Right lobe of liver (tissue), 6 donors: ENCODE measurements at regions of chr1 and their contacts with region 1.

Region 1: DNA sequence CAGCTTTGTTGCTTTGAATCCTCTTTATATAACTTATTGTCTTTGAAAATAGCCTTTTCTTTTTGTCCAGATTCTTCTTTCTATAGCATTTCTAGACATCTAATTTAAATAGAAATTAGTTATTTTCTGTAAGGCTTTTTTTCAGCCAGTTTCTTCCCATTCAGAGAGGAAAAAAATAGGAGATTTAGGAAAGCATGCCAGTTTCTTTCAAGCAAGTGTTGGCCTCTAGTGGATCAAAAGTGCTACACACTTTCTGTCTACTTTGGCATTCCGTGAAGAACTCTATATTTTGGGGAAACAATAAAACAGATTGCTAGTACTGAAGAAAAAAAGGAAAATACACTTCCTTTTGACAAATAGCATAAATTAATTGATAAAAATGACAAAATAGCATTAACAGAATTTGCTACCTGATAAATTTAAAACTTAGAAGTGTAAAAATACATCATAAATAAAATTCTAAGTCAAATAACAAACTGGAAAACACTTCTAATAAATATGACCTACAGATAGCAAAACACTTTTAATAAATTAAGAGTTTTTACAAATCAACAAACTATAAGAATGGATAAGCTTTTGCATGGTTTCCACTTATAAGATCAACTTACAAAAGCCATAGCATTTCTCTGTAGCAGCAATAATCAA is 13.1 kb upstream of the EXO1 start:
- DNase-seq: no peak
- ATAC-seq: peak; percentile 76 to 95 (median 82)
- H3K4me3 ChIP-seq: no peak overlapping the region
- H3K27ac ChIP-seq: no peak overlapping the region
- H3K4me1 ChIP-seq: no peaks in the 10 kb centered on the region
- H3K27me3 ChIP-seq: no peaks in the 10 kb centered on the region
- CTCF ChIP-seq: peak; percentile 62 to 76 (median 70)
- POLR2A ChIP-seq: no peak

Region 2: GRCh38 chr1:241592273-241592958 is 242.4 kb before region 1 on chr1:
- intact Hi-C with region 1: no loop called
- DNase-seq: no peak
- ATAC-seq: no peak
- H3K4me3 ChIP-seq: no peak overlapping the region
- H3K27ac ChIP-seq: no peak overlapping the region
- H3K4me1 ChIP-seq: no peaks in the 10 kb centered on the region
- H3K27me3 ChIP-seq: no peaks in the 10 kb centered on the region
- CTCF ChIP-seq: no peak
- POLR2A ChIP-seq: no peak

Region 3: GRCh38 chr1:241611063-241611462 is 223.8 kb before region 1 on chr1:
- intact Hi-C with region 1: loop called in 1 of 2 experiments (anchors 10 kb)
- DNase-seq: no peak
- ATAC-seq: peak; percentile 57 to 72 (median 66)
- H3K4me3 ChIP-seq: no peak overlapping the region
- H3K27ac ChIP-seq: peak overlapping the region; percentile 19 to 82 (median 47)
- H3K4me1 ChIP-seq: peaks cover 0 to 46% (median 18%) of the 10 kb centered on the region in 4 donors
- H3K27me3 ChIP-seq: no peaks in the 10 kb centered on the region
- CTCF ChIP-seq: peak; percentile 66 to 92 (median 74)
- POLR2A ChIP-seq: no peak

Region 4: DNA sequence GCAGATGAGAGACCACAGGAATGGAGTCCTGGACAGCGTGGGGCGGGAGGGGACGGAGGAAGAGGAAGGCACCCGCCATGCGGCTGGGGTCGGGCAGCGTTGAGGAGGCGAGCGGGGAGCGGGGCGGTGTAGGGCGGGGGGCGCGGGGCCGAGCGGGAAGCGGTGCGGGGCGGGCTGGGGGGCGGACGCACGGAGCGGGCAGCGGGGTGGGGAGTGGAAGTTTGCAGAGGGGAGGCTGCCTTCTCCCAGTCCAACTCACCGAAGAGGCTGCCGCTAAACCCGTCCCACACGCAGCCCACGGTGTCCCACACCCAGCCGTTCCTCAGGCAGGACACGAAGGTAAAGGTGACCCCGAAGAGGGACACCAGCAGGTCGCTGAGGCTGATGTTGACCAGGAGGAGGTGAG is 195.2 kb before region 1 on chr1:
- intact Hi-C with region 1: loop called in 1 of 2 experiments (anchors 10 kb)
- DNase-seq: peak; percentile 49 to 69 (median 60)
- ATAC-seq: peak; percentile 9 to 28 (median 18)
- H3K4me3 ChIP-seq: peak overlapping the region; percentile 75 to 85 (median 80)
- H3K27ac ChIP-seq: peak overlapping the region; percentile 69 to 91 (median 88)
- H3K4me1 ChIP-seq: peaks cover 0 to 26% (median 4%) of the 10 kb centered on the region in 4 donors
- H3K27me3 ChIP-seq: no peaks in the 10 kb centered on the region
- CTCF ChIP-seq: no peak
- POLR2A ChIP-seq: no peak

Region 5: DNA sequence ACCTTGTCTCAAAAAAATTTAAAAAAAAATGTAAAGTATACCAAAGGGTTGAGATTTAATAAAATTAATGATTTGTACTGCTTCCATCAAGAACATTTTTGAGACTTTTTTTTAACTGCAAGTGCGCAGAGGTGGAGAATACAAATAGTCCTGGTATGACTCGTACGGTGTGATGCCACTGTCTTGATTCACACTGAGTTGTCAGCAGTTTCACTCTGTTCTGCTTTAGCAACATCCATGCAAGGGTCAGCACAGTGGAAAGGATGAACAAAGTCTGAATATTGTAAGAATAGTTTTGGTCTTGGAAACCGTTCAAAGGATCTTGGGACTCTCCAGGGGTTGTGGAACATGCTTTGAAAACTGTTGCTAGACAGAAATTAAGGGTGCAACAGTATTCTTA is 53.4 kb after region 1 on chr1:
- intact Hi-C with region 1: no loop called
- DNase-seq: no peak
- ATAC-seq: no peak
- H3K4me3 ChIP-seq: no peak overlapping the region
- H3K27ac ChIP-seq: no peak overlapping the region
- H3K4me1 ChIP-seq: no peaks in the 10 kb centered on the region
- H3K27me3 ChIP-seq: no peaks in the 10 kb centered on the region
- CTCF ChIP-seq: no peak
- POLR2A ChIP-seq: no peak